OCI-LY7 (cell line): ENCODE measurements at regions of chr17 and their contacts with region 1.

Region 1: GRCh38 chr17:60599620-60600489 is at the start of gene PPM1D:
- DNase-seq: peak; percentile 99
- H3K4me3 ChIP-seq: peak within 1 kb of the TSS; percentile 86
- H3K27ac ChIP-seq: peak within 1 kb of the TSS; percentile 78
- H3K4me1 ChIP-seq: peaks cover 26% of the 10 kb centered on the region
- CTCF ChIP-seq: no peak
- total RNA-seq, gene PPM1D: 9.1 and 14.2 TPM in 2 replicates

Region 2: DNA sequence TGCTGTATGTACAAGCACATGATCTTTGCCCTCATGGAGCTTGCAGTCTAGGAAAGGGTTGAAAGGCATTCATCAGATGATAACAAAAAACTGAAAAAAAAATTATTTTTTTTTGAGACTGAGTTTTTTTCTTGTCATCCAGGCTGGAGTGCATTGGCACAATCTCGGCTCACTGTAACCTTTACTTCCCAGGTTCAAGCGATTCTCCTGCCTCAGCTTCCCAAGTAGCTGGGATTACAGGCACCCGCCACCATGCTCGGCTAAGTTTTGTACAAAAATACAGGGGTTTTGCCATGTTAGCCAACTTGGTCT is 39.1 kb after region 1 on chr17:
- CTCF ChIA-PET with region 1: no interaction called
- POLR2A ChIA-PET with region 1: interaction called, 3 read pairs
- intact Hi-C with region 1: loop called (anchors 5 kb)
- DNase-seq: no peak
- H3K4me3 ChIP-seq: no peak overlapping the region
- H3K27ac ChIP-seq: no peak overlapping the region
- H3K4me1 ChIP-seq: no peaks in the 10 kb centered on the region
- CTCF ChIP-seq: peak; percentile 12; the same call in 1 of the 2 replicates

Region 3: GRCh38 chr17:60677308-60678124 is 77.7 kb after region 1 on chr17 and contains the start of gene BCAS3:
- CTCF ChIA-PET with region 1: no interaction called
- POLR2A ChIA-PET with region 1: no interaction called
- intact Hi-C with region 1: loop called (anchors 2 kb)
- DNase-seq: peak; percentile 98
- H3K4me3 ChIP-seq: peak within 1 kb of the TSS; percentile 80
- H3K27ac ChIP-seq: no peak within 1 kb of the TSS
- H3K4me1 ChIP-seq: peaks cover 11% of the 10 kb centered on the region
- CTCF ChIP-seq: no peak
- total RNA-seq, gene BCAS3: 12.1 and 13.4 TPM in 2 replicates